Naive thymus-derived CD4-positive, alpha-beta T cell (primary cell): ENCODE measurements at regions of chr22 and their contacts with region 1.

Region 1: GRCh38 chr22:37199103-37199759 is 11.2 kb upstream of the C1QTNF6 start:
- DNase-seq: peak; percentile 94 to 100 (median 99)
- ATAC-seq: peak; percentile 98
- H3K4me3 ChIP-seq: peak overlapping the region; percentile 90
- H3K4me3 Mint-ChIP-seq: peak overlapping the region; percentile 80 to 90 (median 86)
- H3K27ac ChIP-seq: peak overlapping the region; percentile 86
- H3K27ac Mint-ChIP-seq: peak overlapping the region; percentile 87 to 99 (median 96)
- H3K4me1 ChIP-seq: peaks cover 24 to 33% of the 10 kb centered on the region in 2 donors
- H3K4me1 Mint-ChIP-seq: peaks cover 19 to 60% (median 41%) of the 10 kb centered on the region in 7 donors
- H3K27me3 ChIP-seq: no peaks in the 10 kb centered on the region
- H3K27me3 Mint-ChIP-seq: no peaks in the 10 kb centered on the region

Region 2: DNA sequence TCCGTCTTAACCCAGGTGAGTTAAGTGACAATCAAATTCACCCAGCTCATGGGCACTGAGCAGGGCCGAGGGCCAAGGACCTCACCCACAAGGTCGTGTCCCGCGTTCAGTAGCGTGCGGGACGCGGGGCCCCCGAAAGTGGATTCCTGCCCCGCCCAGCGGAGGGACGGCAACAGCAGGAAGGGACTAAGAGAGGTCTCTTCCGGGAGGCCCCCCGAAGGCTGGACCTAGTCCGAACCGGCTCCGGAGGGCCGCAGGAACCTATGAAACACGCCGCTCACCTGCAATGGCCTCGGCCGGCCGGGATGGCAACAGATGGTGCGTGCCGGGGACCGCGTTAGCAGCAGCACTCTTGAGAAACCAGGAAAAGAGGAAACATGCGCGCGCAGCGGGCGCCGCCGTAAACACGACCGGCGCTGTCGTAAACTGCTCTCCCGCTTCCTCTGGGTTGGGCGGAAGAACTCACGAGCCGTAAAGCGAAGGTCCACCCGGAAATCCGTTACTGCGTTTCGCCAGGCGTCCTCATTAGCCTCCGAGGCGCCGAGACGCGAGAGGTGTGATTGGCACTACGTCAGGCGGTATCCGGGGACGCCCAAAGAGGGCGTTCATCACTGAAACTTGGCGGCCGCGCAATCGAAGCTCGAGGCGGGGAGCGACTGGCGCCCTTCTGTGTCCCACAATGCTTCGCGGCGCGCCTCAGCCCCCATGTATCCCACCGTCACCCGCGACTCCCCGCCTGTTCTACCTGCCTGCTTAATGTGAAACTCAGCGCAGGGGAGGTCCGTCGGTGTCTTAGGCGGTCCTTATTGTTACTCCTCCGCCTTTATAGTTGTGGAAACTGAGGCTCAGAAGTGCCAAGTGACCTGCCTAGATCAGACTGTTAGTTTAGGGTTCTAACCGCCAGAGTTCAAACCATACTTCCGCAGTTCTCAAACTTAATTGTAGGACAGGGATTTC is 670.2 kb before region 1 on chr22 and contains the start of gene EIF3D:
- CTCF ChIA-PET with region 1: no interaction called
- POLR2A ChIA-PET with region 1: no interaction called
- intact Hi-C with region 1: loop called in 1 of 2 experiments (anchors 1 kb)
- DNase-seq: peak; percentile 93 to 100 (median 99)
- ATAC-seq: peak; percentile 94
- H3K4me3 ChIP-seq: peak within 1 kb of the TSS; percentile 84
- H3K4me3 Mint-ChIP-seq: peak within 1 kb of the TSS; percentile 78 to 98 (median 96)
- H3K27ac ChIP-seq: peak within 1 kb of the TSS; percentile 92
- H3K27ac Mint-ChIP-seq: peak within 1 kb of the TSS; percentile 94 to 99 (median 98)
- H3K4me1 ChIP-seq: peaks cover 4 to 12% of the 10 kb centered on the region in 2 donors
- H3K4me1 Mint-ChIP-seq: peaks cover 11 to 23% (median 21%) of the 10 kb centered on the region in 7 donors
- H3K27me3 ChIP-seq: no peaks in the 10 kb centered on the region
- H3K27me3 Mint-ChIP-seq: peaks cover 0 to 4% (median 0%) of the 10 kb centered on the region in 5 donors
- total RNA-seq, gene EIF3D: 220 to 257 (median 232) TPM

Region 3: DNA sequence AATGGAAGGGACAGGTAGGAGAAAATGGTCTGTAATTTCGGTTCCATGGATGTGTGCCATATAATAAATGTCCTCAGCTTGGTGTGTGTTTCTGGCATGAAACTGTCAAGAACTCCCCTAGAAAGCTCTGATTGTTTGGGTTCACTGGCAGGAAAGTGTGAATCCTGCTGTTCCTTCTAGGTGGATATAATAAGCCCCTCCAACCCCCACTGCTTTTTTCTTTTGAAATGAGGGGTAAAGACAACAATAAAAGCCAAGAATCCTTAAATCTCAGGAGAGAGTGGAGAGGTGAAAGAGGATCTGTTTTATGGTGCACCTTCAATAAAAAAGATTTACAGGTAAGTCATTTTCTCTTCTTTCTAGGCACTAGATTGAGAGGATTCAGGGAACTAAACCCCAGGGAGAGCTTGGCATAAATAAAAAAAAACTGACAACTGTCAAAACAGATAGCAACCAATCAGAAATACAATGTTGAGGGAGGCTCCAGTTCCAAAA is 570.6 kb before region 1 on chr22:
- CTCF ChIA-PET with region 1: no interaction called
- POLR2A ChIA-PET with region 1: no interaction called
- intact Hi-C with region 1: no loop called
- DNase-seq: no peak
- ATAC-seq: no peak
- H3K4me3 ChIP-seq: no peak overlapping the region
- H3K4me3 Mint-ChIP-seq: no peak overlapping the region
- H3K27ac ChIP-seq: no peak overlapping the region
- H3K27ac Mint-ChIP-seq: no peak overlapping the region
- H3K4me1 ChIP-seq: no peaks in the 10 kb centered on the region
- H3K4me1 Mint-ChIP-seq: no peaks in the 10 kb centered on the region
- H3K27me3 ChIP-seq: peaks cover 0 to 4% of the 10 kb centered on the region in 2 donors
- H3K27me3 Mint-ChIP-seq: peaks cover 21 to 30% (median 27%) of the 10 kb centered on the region in 5 donors

Region 4: DNA sequence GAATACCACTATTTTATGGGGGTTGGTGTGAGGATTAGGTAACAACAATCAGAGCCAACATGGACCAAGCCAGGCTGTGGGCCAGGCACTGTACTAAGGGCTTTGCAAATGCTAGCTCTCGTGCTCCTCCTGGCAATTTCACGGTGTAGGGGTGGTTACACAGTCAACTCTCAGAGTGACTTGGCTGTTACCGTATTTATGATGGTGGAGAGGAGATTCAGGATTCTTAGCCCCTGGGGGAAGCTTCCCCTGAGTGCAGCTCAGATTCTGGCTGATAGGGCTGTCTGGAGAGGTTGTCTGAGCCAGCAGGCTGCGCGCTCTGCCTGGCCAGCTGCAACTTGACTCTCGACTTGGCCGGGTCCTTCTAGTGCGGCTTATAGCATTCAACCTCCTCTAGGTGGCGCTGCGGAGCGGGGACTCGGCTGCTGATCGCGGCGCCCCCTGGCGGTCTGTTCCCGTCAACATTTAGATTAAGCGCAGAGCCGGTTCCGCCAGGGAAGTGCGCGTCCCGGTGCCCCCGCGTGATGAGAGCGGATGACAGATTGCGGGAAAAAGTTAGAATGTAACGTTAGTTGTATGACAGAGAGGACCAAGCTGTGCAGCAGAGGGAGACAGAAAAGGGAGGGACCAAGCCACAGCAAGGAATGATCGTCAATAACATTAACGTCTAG is 343.0 kb before region 1 on chr22:
- CTCF ChIA-PET with region 1: interaction called, 3 read pairs
- POLR2A ChIA-PET with region 1: no interaction called
- intact Hi-C with region 1: loop called (anchors 1 to 10 kb)
- DNase-seq: peak; percentile 79 to 99 (median 89)
- ATAC-seq: peak; percentile 92
- H3K4me3 ChIP-seq: no peak overlapping the region
- H3K4me3 Mint-ChIP-seq: peak overlapping the region in 8 of 10 donors; percentile 27 to 75 (median 56)
- H3K27ac ChIP-seq: no peak overlapping the region
- H3K27ac Mint-ChIP-seq: peak overlapping the region in 3 of 9 donors; percentile 1 to 38 (median 32)
- H3K4me1 ChIP-seq: peaks cover 0 to 15% of the 10 kb centered on the region in 2 donors
- H3K4me1 Mint-ChIP-seq: peaks cover 17 to 45% (median 21%) of the 10 kb centered on the region in 7 donors
- H3K27me3 ChIP-seq: no peaks in the 10 kb centered on the region
- H3K27me3 Mint-ChIP-seq: peaks cover 0 to 5% (median under 1%) of the 10 kb centered on the region in 5 donors

Region 5: GRCh38 chr22:37077884-37078485 is 121.2 kb before region 1 on chr22:
- CTCF ChIA-PET with region 1: interaction called, 17 read pairs
- POLR2A ChIA-PET with region 1: interaction called, 6 read pairs
- intact Hi-C with region 1: loop called (anchors 1 kb)
- DNase-seq: peak; percentile 69 to 92 (median 83)
- ATAC-seq: peak; percentile 56
- H3K4me3 ChIP-seq: no peak overlapping the region
- H3K4me3 Mint-ChIP-seq: peak overlapping the region; percentile 41 to 81 (median 65)
- H3K27ac ChIP-seq: peak overlapping the region; percentile 93
- H3K27ac Mint-ChIP-seq: peak overlapping the region; percentile 95 to 100 (median 99)
- H3K4me1 ChIP-seq: peaks cover 34 to 35% of the 10 kb centered on the region in 2 donors
- H3K4me1 Mint-ChIP-seq: peaks cover 23 to 54% (median 40%) of the 10 kb centered on the region in 7 donors
- H3K27me3 ChIP-seq: no peaks in the 10 kb centered on the region
- H3K27me3 Mint-ChIP-seq: peaks cover 0 to 5% (median 4%) of the 10 kb centered on the region in 5 donors

Region 6: GRCh38 chr22:37166675-37167066 is 32.6 kb before region 1 on chr22:
- CTCF ChIA-PET with region 1: interaction called, 18 read pairs
- POLR2A ChIA-PET with region 1: interaction called, 11 read pairs
- intact Hi-C with region 1: loop called (anchors 1 kb)
- DNase-seq: peak; percentile 69 to 84 (median 79)
- ATAC-seq: peak; percentile 79
- H3K4me3 ChIP-seq: peak overlapping the region; percentile 43
- H3K4me3 Mint-ChIP-seq: peak overlapping the region; percentile 60 to 87 (median 76)
- H3K27ac ChIP-seq: peak overlapping the region; percentile 53
- H3K27ac Mint-ChIP-seq: peak overlapping the region; percentile 67 to 93 (median 87)
- H3K4me1 ChIP-seq: peaks cover 65 to 89% of the 10 kb centered on the region in 2 donors
- H3K4me1 Mint-ChIP-seq: peaks cover 50 to 83% (median 71%) of the 10 kb centered on the region in 7 donors
- H3K27me3 ChIP-seq: no peaks in the 10 kb centered on the region
- H3K27me3 Mint-ChIP-seq: no peaks in the 10 kb centered on the region

Region 7: DNA sequence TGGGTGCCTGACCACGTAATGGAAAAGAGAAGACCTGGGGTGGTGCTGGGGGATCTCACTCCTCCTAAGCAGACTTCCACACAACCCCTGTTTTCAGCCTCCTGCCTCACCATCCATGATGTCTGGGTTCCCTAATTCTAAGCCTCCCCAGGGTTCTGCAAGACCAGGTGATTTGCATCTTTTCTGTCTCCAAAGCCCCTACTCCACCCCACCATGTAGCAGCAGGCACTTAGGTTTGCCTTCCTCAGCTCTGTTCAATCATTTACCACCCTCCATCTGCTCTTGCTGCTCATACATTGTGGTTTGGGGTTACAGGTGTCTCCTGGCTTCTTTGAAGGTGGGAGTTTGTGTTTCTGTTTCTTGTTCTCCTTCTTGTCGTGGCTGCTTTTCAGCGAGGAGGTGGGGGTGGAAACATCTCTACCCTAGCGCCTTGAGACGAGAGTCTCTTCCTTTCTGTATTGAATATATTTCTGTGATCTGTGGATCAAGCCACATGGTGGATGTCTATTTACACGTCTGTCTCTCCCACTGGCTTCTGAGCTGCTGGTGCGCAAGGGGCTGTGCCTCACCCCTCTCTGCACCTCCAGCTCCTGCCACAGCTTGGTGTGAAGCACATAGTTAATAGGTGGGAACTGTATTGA is 19.7 kb after region 1 on chr22:
- CTCF ChIA-PET with region 1: interaction called, 39 read pairs
- POLR2A ChIA-PET with region 1: interaction called, 256 read pairs
- intact Hi-C with region 1: loop called (anchors 1 kb)
- DNase-seq: peak in 8 of 9 donors; percentile 59 to 97 (median 94)
- ATAC-seq: peak; percentile 89
- H3K4me3 ChIP-seq: peak overlapping the region; percentile 55
- H3K4me3 Mint-ChIP-seq: peak overlapping the region; percentile 74 to 92 (median 83)
- H3K27ac ChIP-seq: peak overlapping the region; percentile 77
- H3K27ac Mint-ChIP-seq: peak overlapping the region; percentile 79 to 99 (median 91)
- H3K4me1 ChIP-seq: peaks cover 61 to 76% of the 10 kb centered on the region in 2 donors
- H3K4me1 Mint-ChIP-seq: peaks cover 62 to 99% (median 92%) of the 10 kb centered on the region in 7 donors
- H3K27me3 ChIP-seq: no peaks in the 10 kb centered on the region
- H3K27me3 Mint-ChIP-seq: no peaks in the 10 kb centered on the region

Region 8: DNA sequence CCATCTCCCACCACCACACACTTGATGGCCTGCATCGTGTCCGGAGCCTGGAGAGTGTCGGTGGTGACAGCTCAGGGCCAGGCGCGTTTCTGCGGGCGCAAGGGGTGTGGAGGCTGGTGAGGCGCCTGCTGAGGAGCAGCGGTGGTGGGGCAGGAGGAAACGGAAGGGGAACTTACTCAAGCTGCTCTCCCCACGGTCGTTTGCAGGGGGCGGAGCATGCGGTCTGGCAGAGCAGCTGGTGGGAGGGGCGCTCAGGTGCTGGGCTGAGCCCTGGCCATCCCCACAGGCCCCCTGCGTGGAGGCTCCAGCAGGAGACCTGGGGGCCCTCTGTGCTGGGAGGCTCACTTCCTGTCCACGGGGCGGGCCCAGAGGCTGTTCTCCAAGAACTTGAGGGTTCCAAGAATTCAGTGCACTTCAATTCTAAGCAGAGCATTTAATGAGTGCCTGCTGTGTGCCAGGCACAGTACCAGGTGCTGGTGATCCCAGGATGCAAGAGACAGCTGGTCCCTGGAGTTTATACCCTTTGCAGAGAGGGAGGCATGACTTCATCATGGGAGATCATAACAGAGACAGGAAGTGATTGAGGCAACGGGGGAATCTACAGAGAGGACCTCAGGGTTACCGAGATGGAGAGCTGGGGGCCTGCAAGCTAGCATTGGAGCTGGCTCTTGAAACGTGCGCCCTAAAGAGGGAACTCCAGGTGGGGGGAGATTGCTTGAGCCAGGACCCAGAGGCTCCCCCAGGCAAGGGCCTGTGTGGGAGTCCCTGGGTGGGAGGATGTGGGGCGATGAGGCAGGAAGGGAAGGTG is 45.1 kb after region 1 on chr22 and contains the start of gene RAC2:
- CTCF ChIA-PET with region 1: interaction called, 18 read pairs
- POLR2A ChIA-PET with region 1: interaction called, 110 read pairs
- intact Hi-C with region 1: loop called (anchors 1 kb)
- DNase-seq: peak; percentile 62 to 89 (median 76)
- ATAC-seq: peak; percentile 76
- H3K4me3 ChIP-seq: peak within 1 kb of the TSS; percentile 90
- H3K4me3 Mint-ChIP-seq: peak within 1 kb of the TSS; percentile 86 to 99 (median 98)
- H3K27ac ChIP-seq: peak within 1 kb of the TSS; percentile 86
- H3K27ac Mint-ChIP-seq: peak within 1 kb of the TSS; percentile 89 to 99 (median 97)
- H3K4me1 ChIP-seq: peaks cover 42 to 43% of the 10 kb centered on the region in 2 donors
- H3K4me1 Mint-ChIP-seq: peaks cover 33 to 54% (median 50%) of the 10 kb centered on the region in 7 donors
- H3K27me3 ChIP-seq: no peaks in the 10 kb centered on the region
- H3K27me3 Mint-ChIP-seq: no peaks in the 10 kb centered on the region
- total RNA-seq, gene RAC2: 263 to 886 (median 301) TPM

Region 9: GRCh38 chr22:37410174-37411055 is 211.2 kb after region 1 on chr22:
- CTCF ChIA-PET with region 1: no interaction called
- POLR2A ChIA-PET with region 1: no interaction called
- intact Hi-C with region 1: no loop called
- DNase-seq: no peak
- ATAC-seq: peak; percentile 83
- H3K4me3 ChIP-seq: no peak overlapping the region
- H3K4me3 Mint-ChIP-seq: peak overlapping the region in 1 of 10 donors; percentile 47
- H3K27ac ChIP-seq: no peak overlapping the region
- H3K27ac Mint-ChIP-seq: peak overlapping the region in 1 of 9 donors; percentile 9
- H3K4me1 ChIP-seq: peaks cover 0 to 4% of the 10 kb centered on the region in 2 donors
- H3K4me1 Mint-ChIP-seq: peaks cover 0 to 18% (median 8%) of the 10 kb centered on the region in 7 donors
- H3K27me3 ChIP-seq: no peaks in the 10 kb centered on the region
- H3K27me3 Mint-ChIP-seq: peaks cover 12 to 36% (median 14%) of the 10 kb centered on the region in 5 donors